ENCODE measurements at regions of chr3 and their contacts with region 1.

Region 1: GRCh38 chr3:142947799-142948575 is 15.5 kb downstream of the PAQR9 start:
- DNase-seq: no peak
- ATAC-seq: no peak
- H3K4me3 ChIP-seq: no peak overlapping the region
- H3K27ac ChIP-seq: no peak overlapping the region
- H3K4me1 ChIP-seq: no peaks in the 10 kb centered on the region
- H3K27me3 ChIP-seq: peaks cover 5% of the 10 kb centered on the region; the same call in 1 of the 2 replicates
- CTCF ChIP-seq: no peak

Region 2: DNA sequence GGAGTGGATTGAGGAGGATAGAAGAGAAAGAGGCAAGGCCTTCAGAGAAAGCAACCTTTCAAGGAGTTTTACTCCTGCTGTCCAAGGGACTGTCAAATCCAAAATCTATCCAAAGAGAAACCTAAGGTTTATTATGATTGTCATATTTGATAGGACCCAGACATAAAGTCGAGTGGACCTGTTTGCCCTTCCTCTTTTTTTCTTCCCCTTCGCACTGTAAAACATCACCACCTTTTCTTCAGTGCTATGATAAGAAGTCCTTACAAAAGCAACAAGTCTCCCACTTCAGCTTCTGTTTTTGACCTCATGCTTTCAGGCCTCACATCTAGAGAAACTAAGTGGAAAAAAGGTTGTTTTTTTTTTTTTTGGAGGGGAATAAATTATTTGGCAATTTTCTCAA is 151.2 kb before region 1 on chr3:
- CTCF ChIA-PET with region 1: no interaction called
- POLR2A ChIA-PET with region 1: no interaction called
- in situ Hi-C with region 1: no loop called
- intact Hi-C with region 1: no loop called
- DNase-seq: no peak
- ATAC-seq: no peak
- H3K4me3 ChIP-seq: no peak overlapping the region
- H3K27ac ChIP-seq: no peak overlapping the region
- H3K4me1 ChIP-seq: no peaks in the 10 kb centered on the region
- H3K27me3 ChIP-seq: no peaks in the 10 kb centered on the region
- CTCF ChIP-seq: no peak

Region 3: GRCh38 chr3:143016321-143016972 is 68.5 kb after region 1 on chr3:
- CTCF ChIA-PET with region 1: no interaction called
- POLR2A ChIA-PET with region 1: interaction called, 16 read pairs
- in situ Hi-C with region 1: no loop called
- intact Hi-C with region 1: no loop called
- DNase-seq: no peak
- ATAC-seq: no peak
- H3K4me3 ChIP-seq: no peak overlapping the region
- H3K27ac ChIP-seq: no peak overlapping the region
- H3K4me1 ChIP-seq: no peaks in the 10 kb centered on the region
- H3K27me3 ChIP-seq: no peaks in the 10 kb centered on the region
- CTCF ChIP-seq: peak; percentile 65; the same call in 1 of the 2 replicates

Region 4: GRCh38 chr3:143040261-143040879 is 92.4 kb after region 1 on chr3:
- CTCF ChIA-PET with region 1: interaction called, 17 read pairs
- POLR2A ChIA-PET with region 1: no interaction called
- in situ Hi-C with region 1: no loop called
- intact Hi-C with region 1: no loop called
- DNase-seq: no peak
- ATAC-seq: no peak
- H3K4me3 ChIP-seq: no peak overlapping the region
- H3K27ac ChIP-seq: no peak overlapping the region
- H3K4me1 ChIP-seq: no peaks in the 10 kb centered on the region; the same call in 1 of the 2 replicates
- H3K27me3 ChIP-seq: no peaks in the 10 kb centered on the region
- CTCF ChIP-seq: peak; percentile 70; the same call in 1 of the 2 replicates

Region 5: GRCh38 chr3:143151004-143151731 is 203.2 kb after region 1 on chr3:
- CTCF ChIA-PET with region 1: no interaction called
- POLR2A ChIA-PET with region 1: no interaction called
- in situ Hi-C with region 1: no loop called
- intact Hi-C with region 1: no loop called
- DNase-seq: no peak
- ATAC-seq: no peak
- H3K4me3 ChIP-seq: no peak overlapping the region
- H3K27ac ChIP-seq: no peak overlapping the region
- H3K4me1 ChIP-seq: no peaks in the 10 kb centered on the region
- H3K27me3 ChIP-seq: peaks cover 11% of the 10 kb centered on the region; the same call in 1 of the 2 replicates
- CTCF ChIP-seq: no peak